Psoas muscle (tissue), 8 donors: ENCODE measurements at regions of chr12 and their contacts with region 1.

Region 1: DNA sequence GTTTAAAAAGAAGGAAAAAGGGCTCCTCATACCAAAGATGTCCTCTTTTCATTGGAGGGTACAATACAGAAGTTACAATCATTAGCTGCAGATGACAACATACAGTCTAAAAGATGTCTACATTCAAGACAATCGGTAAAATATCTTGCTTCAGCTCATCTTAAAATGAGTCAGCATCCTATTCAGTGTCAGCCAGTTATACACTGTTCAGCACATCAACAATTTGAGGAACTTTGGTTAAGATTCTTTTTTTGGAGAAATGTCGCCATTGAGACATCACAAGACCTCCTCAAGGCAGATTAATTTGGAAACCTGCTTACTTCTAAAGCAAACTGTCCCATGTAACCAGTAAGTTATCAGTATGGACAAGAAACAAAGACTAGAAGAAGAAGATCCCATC is 100.7 kb upstream of the SLC38A4 start:
- DNase-seq: no peak
- ATAC-seq: no peak
- H3K4me3 ChIP-seq: no peak overlapping the region
- H3K27ac ChIP-seq: no peak overlapping the region
- H3K4me1 ChIP-seq: no peaks in the 10 kb centered on the region
- H3K27me3 ChIP-seq: no peaks in the 10 kb centered on the region
- CTCF ChIP-seq: no peak

Region 2: DNA sequence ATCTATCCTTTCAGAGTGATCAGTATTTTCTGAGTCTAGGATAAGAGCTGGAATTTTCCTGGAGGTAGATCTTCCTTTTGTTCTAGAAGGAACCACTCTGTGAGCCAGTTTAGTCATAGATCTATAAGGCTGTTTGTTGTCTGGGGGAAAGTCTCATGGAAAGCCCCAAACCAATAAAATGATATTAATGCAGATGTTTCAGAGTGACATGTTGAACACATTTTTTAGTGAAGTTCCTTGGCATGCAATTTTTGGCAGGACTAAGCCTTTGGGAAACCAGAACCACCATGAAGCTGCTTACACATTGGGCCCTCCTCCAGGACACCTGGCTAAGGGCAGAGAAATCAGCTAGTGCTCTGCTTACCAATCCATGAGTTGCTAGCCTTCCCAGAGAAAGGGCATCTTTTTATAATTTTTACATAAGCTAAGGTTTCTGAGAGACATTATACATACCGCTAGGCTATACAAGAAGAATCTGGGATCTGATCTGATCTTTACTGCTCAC is 51.4 kb after region 1 on chr12:
- intact Hi-C with region 1: loop called in 1 of 2 experiments (anchors 5 kb)
- DNase-seq: no peak
- ATAC-seq: no peak
- H3K4me3 ChIP-seq: no peak overlapping the region
- H3K27ac ChIP-seq: no peak overlapping the region
- H3K4me1 ChIP-seq: no peaks in the 10 kb centered on the region
- H3K27me3 ChIP-seq: no peaks in the 10 kb centered on the region
- CTCF ChIP-seq: no peak